Dorsolateral prefrontal cortex (tissue), 120 donors: ENCODE measurements at regions of chr9 and their contacts with region 1.

Region 1: DNA sequence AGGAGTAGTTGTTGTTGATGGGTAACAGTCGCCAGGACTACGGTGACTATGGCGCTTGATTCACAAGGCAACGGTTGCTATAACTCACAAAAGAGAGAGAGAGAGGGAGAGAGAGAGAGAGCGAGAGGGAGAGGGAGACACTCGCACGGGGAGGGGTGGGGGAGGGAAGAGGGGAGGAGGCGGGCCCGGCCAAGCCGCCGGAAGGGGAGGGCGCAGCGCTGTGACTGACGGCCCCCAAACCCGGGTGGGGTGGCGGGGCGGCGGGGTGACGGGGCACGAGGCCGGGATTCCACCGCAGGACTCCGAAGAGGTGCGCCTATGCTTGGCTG is at the start of gene RFX3:
- DNase-seq: peak; percentile 77 to 92 (median 87)
- H3K4me3 ChIP-seq: peak within 1 kb of the TSS; percentile 71 to 99 (median 93)
- H3K27ac ChIP-seq: peak within 1 kb of the TSS; percentile 97 to 100 (median 100)
- H3K27me3 ChIP-seq: no peaks in the 10 kb centered on the region
- CTCF ChIP-seq: peak in 1 of 56 donors; percentile 6
- total RNA-seq, gene RFX3: 34.7 to 99.1 (median 60.1) TPM

Region 2: DNA sequence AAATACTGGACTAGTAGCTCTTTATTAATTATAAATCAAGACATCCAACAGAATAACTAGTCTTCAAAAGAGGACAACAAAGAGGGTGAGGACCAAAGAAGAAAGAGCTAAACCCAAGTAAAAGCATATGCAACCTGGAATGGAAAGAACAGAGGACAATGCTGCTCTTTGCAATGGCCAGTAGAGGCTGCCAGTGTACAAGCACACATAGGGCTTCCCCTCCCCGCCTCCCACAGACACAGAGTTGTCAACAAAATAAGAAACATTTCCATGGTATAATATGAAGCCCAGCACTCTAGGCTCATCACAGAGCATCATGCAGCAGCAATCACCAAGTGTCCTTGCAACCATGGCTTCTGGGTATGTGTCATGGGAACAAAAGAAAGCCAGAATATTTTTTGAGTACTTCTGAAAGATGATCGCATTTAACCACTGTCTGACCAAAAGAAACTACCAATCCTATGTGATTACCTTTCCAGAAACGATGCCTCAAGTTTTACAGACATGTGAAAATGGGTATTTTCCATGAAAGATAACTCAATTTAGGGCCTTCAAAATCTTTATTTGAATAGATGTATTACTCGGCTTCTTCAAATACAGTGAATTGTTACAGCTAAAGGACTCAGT is 58.1 kb before region 1 on chr9:
- intact Hi-C with region 1: loop called in 1 of 2 experiments (anchors 10 kb)
- DNase-seq: peak in 9 of 10 donors; percentile 29 to 69 (median 46)
- H3K4me3 ChIP-seq: peak overlapping the region in 2 of 59 donors; percentile 11 to 12
- H3K27ac ChIP-seq: peak overlapping the region in 9 of 59 donors; percentile 3 to 54 (median 24)
- H3K27me3 ChIP-seq: no peaks in the 10 kb centered on the region
- CTCF ChIP-seq: peak in 55 of 56 donors; percentile 30 to 82 (median 67)

Region 3: GRCh38 chr9:3730511-3730922 is 204.7 kb after region 1 on chr9:
- intact Hi-C with region 1: no loop called
- DNase-seq: no peak
- H3K4me3 ChIP-seq: no peak overlapping the region
- H3K27ac ChIP-seq: no peak overlapping the region
- H3K27me3 ChIP-seq: no peaks in the 10 kb centered on the region
- CTCF ChIP-seq: no peak